ENCODE measurements at regions of chr13 and their contacts with region 1.

Region 1: GRCh38 chr13:45623515-45624090 is 8.1 kb upstream of the ERICH6B start:
- DNase-seq: no peak
- ATAC-seq: no peak
- H3K4me3 ChIP-seq: no peak overlapping the region
- H3K27ac ChIP-seq: no peak overlapping the region
- H3K4me1 ChIP-seq: no peaks in the 10 kb centered on the region
- H3K27me3 ChIP-seq: peaks cover 0 to 26% (median 18%) of the 10 kb centered on the region in 9 donors
- CTCF ChIP-seq: peak; percentile 17 to 50 (median 40)
- POLR2A ChIP-seq: no peak

Region 2: DNA sequence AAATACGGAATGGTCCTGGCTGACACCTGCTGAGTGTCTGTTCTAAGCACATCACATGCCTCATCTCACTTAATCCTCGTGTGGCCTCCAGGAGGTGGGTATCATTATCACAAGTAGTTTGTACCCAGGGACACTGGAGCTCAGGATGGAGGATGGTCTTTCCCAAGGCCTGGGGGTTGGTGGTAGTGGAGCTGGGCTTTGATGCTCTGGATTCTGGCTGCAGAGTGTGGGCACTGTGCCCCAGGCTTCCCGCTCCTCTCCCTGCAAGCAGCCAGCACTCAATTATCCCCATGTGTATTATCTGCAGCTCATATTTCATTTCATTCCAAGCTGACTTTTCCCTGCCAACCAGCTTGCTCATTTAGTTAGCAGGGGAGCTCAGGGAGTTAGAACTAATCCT is 175.8 kb after region 1 on chr13:
- intact Hi-C with region 1: loop called in 2 of 10 experiments (anchors 10 kb)
- DNase-seq: peak in 1 of 5 donors; percentile 51
- ATAC-seq: peak in 3 of 4 donors; percentile 60 to 83 (median 71)
- H3K4me3 ChIP-seq: no peak overlapping the region
- H3K27ac ChIP-seq: no peak overlapping the region
- H3K4me1 ChIP-seq: peaks cover 0 to 9% (median 0%) of the 10 kb centered on the region in 12 donors
- H3K27me3 ChIP-seq: no peaks in the 10 kb centered on the region
- CTCF ChIP-seq: no peak
- POLR2A ChIP-seq: no peak

Region 3: GRCh38 chr13:45807520-45808099 is 184.0 kb after region 1 on chr13:
- intact Hi-C with region 1: loop called in 1 of 10 experiments (anchors 10 kb)
- DNase-seq: peak in 3 of 5 donors; percentile 27 to 53 (median 47)
- ATAC-seq: peak; percentile 53 to 81 (median 68)
- H3K4me3 ChIP-seq: no peak overlapping the region
- H3K27ac ChIP-seq: no peak overlapping the region
- H3K4me1 ChIP-seq: peaks cover 0 to 5% (median 0%) of the 10 kb centered on the region in 12 donors
- H3K27me3 ChIP-seq: no peaks in the 10 kb centered on the region
- CTCF ChIP-seq: peak; percentile 40 to 71 (median 56)
- POLR2A ChIP-seq: no peak

Region 4: DNA sequence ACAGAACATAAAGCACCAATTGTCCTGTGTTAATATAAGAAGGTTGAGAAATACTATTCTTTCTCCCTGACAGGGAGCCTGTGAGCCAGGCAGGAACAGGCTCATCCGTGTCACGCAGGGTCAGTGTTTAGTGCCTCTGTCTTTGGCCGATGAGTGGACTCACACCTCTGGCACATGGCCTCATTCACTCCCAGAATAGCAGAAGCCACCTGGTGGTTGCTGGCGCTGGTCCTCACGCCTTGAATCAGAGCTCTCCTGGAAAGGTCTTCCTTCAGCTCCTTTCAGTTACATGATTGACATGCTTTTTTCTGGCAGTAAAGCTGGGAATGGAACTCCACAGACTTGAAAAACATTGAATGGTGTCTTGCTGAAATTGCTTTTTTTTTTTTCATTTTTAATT is 256.1 kb after region 1 on chr13:
- intact Hi-C with region 1: loop called in 1 of 10 experiments (anchors 10 kb)
- DNase-seq: peak in 4 of 5 donors; percentile 43 to 82 (median 59)
- ATAC-seq: peak; percentile 80 to 98 (median 93)
- H3K4me3 ChIP-seq: no peak overlapping the region
- H3K27ac ChIP-seq: peak overlapping the region in 1 of 12 donors; percentile 30
- H3K4me1 ChIP-seq: peaks cover 0 to 6% (median 0%) of the 10 kb centered on the region in 12 donors
- H3K27me3 ChIP-seq: peaks cover 0 to 2% (median 0%) of the 10 kb centered on the region in 9 donors
- CTCF ChIP-seq: peak in 11 of 12 donors; percentile 6 to 52 (median 39)
- POLR2A ChIP-seq: no peak

Region 5: GRCh38 chr13:46126552-46127357 is 503.2 kb after region 1 on chr13:
- intact Hi-C with region 1: loop called in 3 of 10 experiments (anchors 5 to 10 kb)
- DNase-seq: peak; percentile 45 to 68 (median 52)
- ATAC-seq: peak in 3 of 4 donors; percentile 87 to 90 (median 89)
- H3K4me3 ChIP-seq: no peak overlapping the region
- H3K27ac ChIP-seq: no peak overlapping the region
- H3K4me1 ChIP-seq: peaks cover 0 to 24% (median 0%) of the 10 kb centered on the region in 12 donors
- H3K27me3 ChIP-seq: peaks cover 0 to 34% (median 0%) of the 10 kb centered on the region in 9 donors
- CTCF ChIP-seq: peak; percentile 43 to 74 (median 62)
- POLR2A ChIP-seq: no peak

Region 6: GRCh38 chr13:46160471-46161066 is 537.0 kb after region 1 on chr13:
- intact Hi-C with region 1: loop called in 1 of 10 experiments (anchors 10 kb)
- DNase-seq: no peak
- ATAC-seq: peak in 3 of 4 donors; percentile 48 to 64 (median 55)
- H3K4me3 ChIP-seq: no peak overlapping the region
- H3K27ac ChIP-seq: peak overlapping the region in 1 of 12 donors; percentile 64
- H3K4me1 ChIP-seq: peaks cover 0 to 46% (median 0%) of the 10 kb centered on the region in 12 donors
- H3K27me3 ChIP-seq: peaks cover 0 to 15% (median 0%) of the 10 kb centered on the region in 9 donors
- CTCF ChIP-seq: peak; percentile 61 to 87 (median 72)
- POLR2A ChIP-seq: no peak